Heart left ventricle (tissue), 16 donors: ENCODE measurements at regions of chr17 and their contacts with region 1.

Region 1: DNA sequence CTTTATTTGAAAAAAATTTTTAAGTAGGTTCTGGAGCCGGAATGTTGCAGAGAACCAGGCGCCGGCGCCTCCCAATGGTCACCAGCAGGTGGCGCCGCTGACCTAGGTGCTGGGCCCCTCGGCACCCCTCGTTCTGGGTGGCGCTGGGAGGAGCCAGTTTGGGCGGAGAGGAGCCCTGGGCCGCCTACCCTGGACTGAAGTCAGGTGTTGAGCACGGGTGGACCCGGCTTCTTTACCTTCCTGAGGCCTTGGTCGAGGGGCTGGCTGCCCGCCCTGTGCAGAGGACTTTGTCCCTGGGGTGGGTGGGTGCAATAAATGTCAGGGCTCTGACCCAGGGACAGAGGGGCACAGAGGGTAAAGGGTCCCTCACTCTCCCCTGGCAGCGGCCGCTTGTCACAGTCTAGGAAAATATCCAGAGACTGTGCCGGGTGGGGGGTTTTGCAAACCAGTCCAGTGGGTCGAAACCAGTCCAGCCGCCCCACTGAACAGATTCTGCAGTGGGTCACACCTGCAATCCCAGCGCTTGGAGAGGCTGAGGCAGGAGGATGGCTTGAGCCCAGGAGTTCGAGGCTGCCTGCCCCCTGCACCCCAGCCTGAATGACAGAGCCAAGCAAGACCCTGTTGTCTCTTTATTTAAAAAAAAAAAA is 30.1 kb upstream of the TNFRSF13B start:
- DNase-seq: peak; percentile 69 to 90 (median 77)
- ATAC-seq: peak; percentile 80 to 90 (median 84)
- H3K4me3 ChIP-seq: peak overlapping the region in 1 of 12 donors; percentile 2
- H3K27ac ChIP-seq: peak overlapping the region in 1 of 12 donors; percentile 9
- H3K4me1 ChIP-seq: peaks cover 0 to 8% (median 6%) of the 10 kb centered on the region in 12 donors
- H3K27me3 ChIP-seq: no peaks in the 10 kb centered on the region
- CTCF ChIP-seq: peak in 11 of 12 donors; percentile 95 to 100 (median 98)
- POLR2A ChIP-seq: no peak

Region 2: DNA sequence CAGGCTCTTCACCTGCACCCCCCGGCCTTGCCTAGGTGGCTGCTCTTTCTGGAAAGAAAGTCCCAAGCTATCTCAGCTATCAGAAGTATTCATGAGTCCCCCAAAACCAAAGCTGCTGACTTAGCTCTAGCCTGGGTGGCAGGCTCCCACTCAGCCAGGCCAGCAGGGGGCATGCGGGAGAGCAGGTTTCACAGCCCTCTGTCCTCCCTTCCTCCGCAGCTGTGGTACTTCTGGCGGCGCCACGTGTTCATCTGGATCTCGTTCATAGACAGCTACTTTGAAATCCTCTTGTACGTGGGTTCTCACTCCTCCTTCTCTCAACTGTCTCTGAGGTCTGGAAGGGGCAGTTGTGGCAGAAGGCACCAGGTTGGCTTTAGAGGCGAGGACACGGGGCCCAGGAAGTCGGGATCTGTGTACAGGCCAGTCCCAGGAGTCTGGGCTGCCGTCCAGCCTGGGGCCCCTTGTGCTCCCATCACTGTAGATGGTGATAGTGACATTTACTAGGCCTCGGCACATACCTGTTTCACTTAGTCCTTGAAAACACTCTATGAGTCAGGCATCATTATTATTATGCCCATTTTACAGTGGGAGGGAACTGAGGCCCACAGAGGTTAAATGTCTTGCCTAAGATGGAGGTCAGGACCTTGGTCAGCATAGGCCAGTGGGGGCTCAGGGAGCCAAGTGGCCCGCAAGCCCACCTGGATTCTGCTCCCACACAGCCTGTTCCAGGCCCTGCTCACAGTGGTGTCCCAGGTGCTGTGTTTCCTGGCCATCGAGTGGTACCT is 573.7 kb before region 1 on chr17:
- intact Hi-C with region 1: no loop called
- DNase-seq: peak in 3 of 5 donors; percentile 48 to 69 (median 55)
- ATAC-seq: peak; percentile 28 to 88 (median 70)
- H3K4me3 ChIP-seq: no peak overlapping the region
- H3K27ac ChIP-seq: no peak overlapping the region
- H3K4me1 ChIP-seq: no peaks in the 10 kb centered on the region
- H3K27me3 ChIP-seq: no peaks in the 10 kb centered on the region
- CTCF ChIP-seq: peak; percentile 36 to 66 (median 49)
- POLR2A ChIP-seq: no peak

Region 3: GRCh38 chr17:16962818-16963217 is 39.2 kb before region 1 on chr17:
- intact Hi-C with region 1: no loop called
- DNase-seq: no peak
- ATAC-seq: peak in 1 of 4 donors; percentile 24
- H3K4me3 ChIP-seq: no peak overlapping the region
- H3K27ac ChIP-seq: no peak overlapping the region
- H3K4me1 ChIP-seq: no peaks in the 10 kb centered on the region
- H3K27me3 ChIP-seq: peaks cover 0 to 7% (median 0%) of the 10 kb centered on the region in 9 donors
- CTCF ChIP-seq: no peak
- POLR2A ChIP-seq: no peak

Region 4: DNA sequence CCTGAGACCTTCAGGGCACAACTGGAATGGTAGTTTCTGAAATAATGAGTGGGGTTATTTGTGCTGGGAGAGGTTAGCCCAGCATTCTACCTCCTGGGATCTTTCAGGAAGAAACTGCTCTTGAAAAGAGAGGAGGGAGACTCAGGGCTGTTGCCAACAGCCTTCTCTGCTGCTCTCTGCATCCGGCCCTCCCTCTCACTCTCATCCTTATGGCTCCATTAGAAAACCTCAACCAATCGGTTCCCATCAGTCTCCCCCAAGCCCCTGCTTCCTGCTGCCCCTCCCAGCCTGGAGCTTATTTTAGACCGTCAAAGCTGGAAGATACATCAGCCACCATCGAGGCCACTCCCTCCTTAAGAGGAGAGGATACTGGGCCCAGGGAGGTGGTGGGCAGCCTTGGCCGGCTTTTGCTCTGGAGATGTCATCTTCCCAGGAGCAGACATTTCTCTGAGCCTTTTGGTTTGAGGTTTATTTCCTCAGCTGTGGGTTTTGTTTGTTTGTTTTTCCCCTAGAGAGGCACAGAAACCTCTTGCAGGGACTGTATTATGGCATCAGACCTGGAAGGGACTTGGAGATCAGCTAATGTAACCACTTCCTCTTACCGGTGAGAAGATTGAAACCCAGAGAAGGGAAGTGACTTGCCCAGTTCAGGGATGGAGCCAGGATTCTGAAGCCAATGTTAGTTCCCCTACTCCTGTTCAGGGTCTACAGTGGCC is 43.0 kb after region 1 on chr17:
- intact Hi-C with region 1: no loop called
- DNase-seq: peak in 4 of 5 donors; percentile 75 to 85 (median 79)
- ATAC-seq: peak; percentile 33 to 66 (median 44)
- H3K4me3 ChIP-seq: peak overlapping the region in 10 of 12 donors; percentile 70 to 93 (median 83)
- H3K27ac ChIP-seq: peak overlapping the region; percentile 75 to 91 (median 86)
- H3K4me1 ChIP-seq: peaks cover 14 to 80% (median 68%) of the 10 kb centered on the region in 12 donors
- H3K27me3 ChIP-seq: no peaks in the 10 kb centered on the region
- CTCF ChIP-seq: no peak
- POLR2A ChIP-seq: peak in 1 of 2 donors; percentile 46

Region 5: GRCh38 chr17:17125136-17126084 is 123.4 kb after region 1 on chr17:
- intact Hi-C with region 1: loop called in 4 of 10 experiments (anchors 5 to 10 kb)
- DNase-seq: peak in 2 of 5 donors; percentile 15 to 27
- ATAC-seq: no peak
- H3K4me3 ChIP-seq: no peak overlapping the region
- H3K27ac ChIP-seq: peak overlapping the region in 6 of 12 donors; percentile 25 to 70 (median 46)
- H3K4me1 ChIP-seq: peaks cover 3 to 85% (median 53%) of the 10 kb centered on the region in 12 donors
- H3K27me3 ChIP-seq: no peaks in the 10 kb centered on the region
- CTCF ChIP-seq: no peak
- POLR2A ChIP-seq: no peak

Region 6: GRCh38 chr17:17216776-17217175 is 214.8 kb after region 1 on chr17:
- intact Hi-C with region 1: loop called in 2 of 10 experiments (anchors 10 kb)
- DNase-seq: peak in 1 of 5 donors; percentile 11
- ATAC-seq: no peak
- H3K4me3 ChIP-seq: no peak overlapping the region
- H3K27ac ChIP-seq: no peak overlapping the region
- H3K4me1 ChIP-seq: peaks cover 0 to 2% (median 0%) of the 10 kb centered on the region in 12 donors
- H3K27me3 ChIP-seq: no peaks in the 10 kb centered on the region
- CTCF ChIP-seq: no peak
- POLR2A ChIP-seq: no peak

Region 7: DNA sequence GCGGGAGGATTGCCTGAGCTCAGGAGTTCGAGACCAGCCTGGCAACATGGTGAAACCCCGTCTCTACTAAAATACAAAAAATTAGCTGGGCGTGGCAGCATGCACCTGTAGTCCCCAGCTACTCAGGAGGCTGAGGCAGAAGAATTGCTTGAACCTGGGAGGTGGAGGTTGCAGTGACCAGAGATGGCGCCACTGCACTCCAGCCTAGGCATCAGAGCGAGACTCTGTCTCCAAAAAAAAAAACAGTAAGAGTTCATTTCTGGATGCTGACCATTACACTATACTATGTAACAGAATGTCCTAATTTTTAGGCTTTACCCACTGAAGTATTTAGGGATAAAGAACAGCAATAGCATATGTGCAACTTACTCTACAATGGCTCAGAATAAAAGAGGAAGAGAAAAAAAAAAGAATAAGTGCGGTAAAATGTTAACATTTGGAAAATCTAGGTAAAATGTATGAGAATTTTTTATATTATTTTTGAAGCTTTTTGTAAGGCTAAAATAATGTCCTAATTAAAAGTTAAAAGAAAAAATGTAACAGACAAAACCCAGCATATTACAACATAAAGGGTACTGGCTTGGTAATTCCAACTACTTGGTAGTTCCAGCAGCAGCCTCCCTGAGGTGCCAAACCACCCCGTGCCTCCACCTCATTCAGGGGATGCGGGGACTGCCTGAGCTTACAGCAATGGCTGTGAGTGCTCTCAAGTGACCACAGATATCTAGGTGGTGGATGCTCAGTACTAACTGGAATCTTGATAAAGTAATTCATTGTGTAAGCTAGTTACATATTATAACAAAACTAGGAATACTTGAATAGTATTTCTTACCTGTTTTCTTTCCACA is 268.2 kb after region 1 on chr17:
- intact Hi-C with region 1: loop called in 1 of 10 experiments (anchors 10 kb)
- DNase-seq: no peak
- ATAC-seq: no peak
- H3K4me3 ChIP-seq: no peak overlapping the region
- H3K27ac ChIP-seq: no peak overlapping the region
- H3K4me1 ChIP-seq: peaks cover 0 to under 1% (median 0%) of the 10 kb centered on the region in 12 donors
- H3K27me3 ChIP-seq: no peaks in the 10 kb centered on the region
- CTCF ChIP-seq: peak in 4 of 12 donors; percentile 18 to 20 (median 19)
- POLR2A ChIP-seq: no peak

Region 8: GRCh38 chr17:17303010-17303846 is 301.2 kb after region 1 on chr17 and contains the start of gene NT5M:
- intact Hi-C with region 1: loop called in 1 of 10 experiments (anchors 10 kb)
- DNase-seq: peak; percentile 69 to 86 (median 76)
- ATAC-seq: peak; percentile 65 to 88 (median 85)
- H3K4me3 ChIP-seq: peak within 1 kb of the TSS; percentile 28 to 76 (median 60)
- H3K27ac ChIP-seq: peak within 1 kb of the TSS; percentile 21 to 79 (median 60)
- H3K4me1 ChIP-seq: peaks cover 0 to 38% (median 8%) of the 10 kb centered on the region in 12 donors
- H3K27me3 ChIP-seq: no peaks in the 10 kb centered on the region
- CTCF ChIP-seq: peak in 1 of 12 donors; percentile 5
- POLR2A ChIP-seq: no peak
- total RNA-seq, gene NT5M: 5.3 to 15.1 (median 7.6) TPM

Region 9: GRCh38 chr17:17641621-17642409 is 639.8 kb after region 1 on chr17:
- intact Hi-C with region 1: loop called in 2 of 10 experiments (anchors 5 kb)
- DNase-seq: peak; percentile 70 to 85 (median 76)
- ATAC-seq: peak; percentile 69 to 91 (median 90)
- H3K4me3 ChIP-seq: no peak overlapping the region
- H3K27ac ChIP-seq: peak overlapping the region in 1 of 12 donors; percentile 23
- H3K4me1 ChIP-seq: peaks cover 0 to 13% (median 0%) of the 10 kb centered on the region in 12 donors
- H3K27me3 ChIP-seq: no peaks in the 10 kb centered on the region
- CTCF ChIP-seq: peak; percentile 80 to 94 (median 88)
- POLR2A ChIP-seq: no peak